ENCODE measurements at regions of chr9 and their contacts with region 1.

Region 1: DNA sequence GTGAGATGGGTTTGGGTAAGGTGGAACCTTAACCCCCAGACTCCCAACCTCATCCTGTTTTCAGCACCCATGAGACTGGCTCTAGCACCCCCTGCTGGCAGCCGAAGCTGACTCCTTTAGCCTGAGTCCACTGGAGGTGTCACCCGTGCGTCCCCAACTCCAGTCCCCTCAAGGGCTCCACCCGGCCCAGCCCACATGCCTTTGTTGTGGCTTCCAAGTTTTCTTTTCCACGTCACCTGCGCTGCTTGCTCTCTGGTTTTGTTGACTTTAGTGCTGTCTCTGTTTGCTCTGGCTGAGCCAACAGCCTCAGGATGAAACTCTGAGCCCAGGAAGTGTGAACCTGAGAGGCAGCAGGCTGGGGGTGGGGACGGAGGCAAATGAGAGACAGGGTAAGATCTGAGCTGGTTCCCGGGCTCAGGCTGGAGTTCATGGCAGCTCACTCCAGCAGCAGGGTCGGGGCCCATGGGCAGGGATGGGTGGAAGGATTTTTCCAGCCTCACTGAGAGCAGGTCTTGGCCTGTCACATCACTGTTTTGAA is 13.2 kb upstream of the AQP7 start:
- DNase-seq: peak; percentile 68 to 76
- H3K4me3 ChIP-seq: no peak overlapping the region
- H3K27ac ChIP-seq: no peak overlapping the region
- H3K4me1 ChIP-seq: peaks cover 0 to 14% (median 3%) of the 10 kb centered on the region in 4 donors
- H3K27me3 ChIP-seq: peaks cover 0 to 20% of the 10 kb centered on the region in 2 donors
- CTCF ChIP-seq: peak; percentile 77 to 78

Region 2: DNA sequence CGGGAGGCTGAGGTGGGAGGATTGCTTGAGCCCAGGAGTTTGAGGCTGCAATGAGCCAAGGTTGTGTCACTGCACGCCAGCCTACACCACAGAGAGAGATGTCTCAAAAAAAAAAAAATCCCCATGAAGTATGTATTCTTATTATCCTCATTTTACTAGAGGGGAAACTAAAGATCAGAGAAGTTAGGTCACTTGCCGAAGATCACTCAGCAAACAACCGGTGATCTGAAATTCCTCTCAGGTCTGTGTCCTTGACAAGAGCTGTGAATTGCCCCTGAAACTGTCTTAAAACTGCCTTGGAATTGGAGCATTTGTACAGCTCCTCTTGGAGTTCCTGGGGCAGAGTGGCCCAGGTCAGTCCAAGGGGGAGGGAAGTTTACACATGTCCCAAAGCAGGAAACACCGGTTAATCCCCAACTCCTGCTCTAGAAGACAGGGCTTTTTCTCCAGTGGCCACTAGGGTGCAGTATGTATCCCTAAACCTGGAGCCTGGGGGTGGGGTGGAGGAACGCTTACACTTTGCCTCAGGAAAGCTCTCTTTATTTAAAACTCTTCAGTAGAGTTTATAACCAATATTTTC is 40.8 kb before region 1 on chr9:
- intact Hi-C with region 1: loop called (anchors 5 kb)
- DNase-seq: peak; percentile 81 to 87
- H3K4me3 ChIP-seq: peak overlapping the region; percentile 6 to 25
- H3K27ac ChIP-seq: no peak overlapping the region
- H3K4me1 ChIP-seq: peaks cover 0 to 6% (median 0%) of the 10 kb centered on the region in 4 donors
- H3K27me3 ChIP-seq: no peaks in the 10 kb centered on the region
- CTCF ChIP-seq: peak; percentile 83 to 89

Region 3: GRCh38 chr9:33676746-33677505 is 261.4 kb after region 1 on chr9:
- intact Hi-C with region 1: no loop called
- DNase-seq: peak in 1 of 2 donors; percentile 65
- H3K4me3 ChIP-seq: peak overlapping the region; percentile 50 to 51
- H3K27ac ChIP-seq: peak overlapping the region in 1 of 2 donors; percentile 41
- H3K4me1 ChIP-seq: peaks cover 0 to 4% (median 0%) of the 10 kb centered on the region in 4 donors
- H3K27me3 ChIP-seq: peaks cover 0 to 4% of the 10 kb centered on the region in 2 donors
- CTCF ChIP-seq: no peak

Region 4: DNA sequence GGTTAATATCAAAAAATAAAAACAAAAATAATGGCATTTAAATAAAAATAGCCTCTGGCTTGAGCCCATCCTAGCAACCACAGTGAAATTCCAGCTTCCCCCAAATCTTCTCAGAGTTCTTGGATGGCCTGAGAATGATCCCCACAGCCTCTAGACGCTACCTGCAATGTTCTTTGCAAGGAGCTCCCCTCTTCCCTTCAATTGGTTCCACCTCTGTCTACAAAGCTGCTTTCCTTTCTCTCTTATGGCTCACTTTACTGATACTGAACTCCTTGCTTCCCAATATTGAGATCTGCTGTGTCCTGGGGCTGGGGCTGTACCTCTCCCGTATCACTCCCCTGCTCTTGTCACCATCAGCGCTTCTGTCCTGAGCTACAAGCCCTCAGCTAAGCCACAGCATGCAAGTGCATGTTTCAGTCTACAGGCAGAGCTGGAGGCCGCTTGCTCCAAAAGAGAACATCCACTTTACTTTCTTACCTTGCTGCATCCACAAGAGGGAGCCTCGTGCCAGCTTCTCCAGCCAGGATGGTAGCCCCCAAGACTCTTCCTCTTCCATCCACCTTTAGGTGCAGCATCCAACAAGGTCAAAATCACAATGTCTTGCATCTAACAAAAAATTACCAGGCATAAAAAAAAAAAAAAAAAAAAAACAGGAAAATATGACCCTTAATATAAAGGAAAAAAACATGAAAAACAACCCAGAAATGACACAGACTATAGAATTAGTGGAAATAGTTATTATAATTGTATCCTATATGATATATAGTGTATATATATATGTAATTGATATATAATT is 322.4 kb after region 1 on chr9:
- intact Hi-C with region 1: no loop called
- DNase-seq: no peak
- H3K4me3 ChIP-seq: no peak overlapping the region
- H3K27ac ChIP-seq: no peak overlapping the region
- H3K4me1 ChIP-seq: no peaks in the 10 kb centered on the region
- H3K27me3 ChIP-seq: peaks cover 0 to 8% of the 10 kb centered on the region in 2 donors
- CTCF ChIP-seq: no peak

Measured in tibial artery (tissue), 4 donors.